ENCODE measurements at regions of chr2 and their contacts with region 1.

Region 1: GRCh38 chr2:134988994-134989605 is 58.1 kb downstream of the MAP3K19 start:
- DNase-seq: peak; percentile 20 to 43 (median 38)
- ATAC-seq: peak; percentile 82
- H3K4me3 ChIP-seq: no peak overlapping the region
- H3K27ac ChIP-seq: no peak overlapping the region
- H3K4me1 ChIP-seq: no peaks in the 10 kb centered on the region
- H3K27me3 ChIP-seq: peaks cover 8 to 9% of the 10 kb centered on the region in 2 experiments; a peak in 3 of 5 replicates
- CTCF ChIP-seq: peak in 2 of 3 experiments; percentile 34 to 64; a peak in 5 of 6 replicates
- EP300 ChIP-seq: no peak
- POLR2A ChIP-seq: no peak
- RAD21 ChIP-seq: peak; percentile 62 to 75

Region 2: DNA sequence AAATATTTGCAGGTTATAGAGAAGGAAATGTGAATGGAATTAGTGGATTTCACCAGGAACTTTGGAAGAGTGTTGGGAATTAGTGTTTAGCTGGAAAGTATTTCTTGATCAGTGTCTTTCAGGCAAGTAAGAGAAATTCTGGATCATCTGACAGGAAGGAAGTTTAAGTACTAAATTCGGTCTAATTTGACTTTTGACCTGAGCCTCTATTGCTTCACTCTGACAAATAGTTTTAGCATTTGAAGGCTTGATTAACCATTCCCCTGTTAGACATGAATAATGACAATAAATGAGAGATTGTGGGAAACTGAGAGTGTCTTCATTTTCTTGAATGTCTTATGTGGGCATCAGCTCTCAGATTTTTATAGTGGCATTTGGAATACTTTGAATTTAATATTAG is 54.5 kb before region 1 on chr2:
- CTCF ChIA-PET with region 1: no interaction called
- POLR2A ChIA-PET with region 1: no interaction called
- in situ Hi-C with region 1: no loop called
- intact Hi-C with region 1: no loop called
- DNase-seq: no peak
- ATAC-seq: no peak
- H3K4me3 ChIP-seq: no peak overlapping the region
- H3K27ac ChIP-seq: no peak overlapping the region
- H3K4me1 ChIP-seq: 0 out of 5 replicates have a peak, but pooled peaks cover 0 to 4% of the 10 kb centered on the region in 2 experiments
- H3K27me3 ChIP-seq: no peaks in the 10 kb centered on the region
- CTCF ChIP-seq: no peak
- EP300 ChIP-seq: no peak
- POLR2A ChIP-seq: no peak
- RAD21 ChIP-seq: no peak

Region 3: GRCh38 chr2:135103843-135104242 is 114.7 kb after region 1 on chr2:
- CTCF ChIA-PET with region 1: no interaction called
- POLR2A ChIA-PET with region 1: no interaction called
- in situ Hi-C with region 1: no loop called
- intact Hi-C with region 1: no loop called
- DNase-seq: no peak
- ATAC-seq: no peak
- H3K4me3 ChIP-seq: no peak overlapping the region
- H3K27ac ChIP-seq: no peak overlapping the region
- H3K4me1 ChIP-seq: no peaks in the 10 kb centered on the region
- H3K27me3 ChIP-seq: no peaks in the 10 kb centered on the region
- CTCF ChIP-seq: no peak
- EP300 ChIP-seq: no peak
- POLR2A ChIP-seq: no peak
- RAD21 ChIP-seq: no peak

Region 4: GRCh38 chr2:135709992-135710391 is 720.9 kb after region 1 on chr2:
- CTCF ChIA-PET with region 1: interaction called, 14 read pairs
- POLR2A ChIA-PET with region 1: no interaction called
- in situ Hi-C with region 1: no loop called
- intact Hi-C with region 1: no loop called
- DNase-seq: peak; percentile 60 to 70 (median 66)
- ATAC-seq: peak; percentile 90
- H3K4me3 ChIP-seq: no peak overlapping the region
- H3K27ac ChIP-seq: no peak overlapping the region
- H3K4me1 ChIP-seq: no peaks in the 10 kb centered on the region
- H3K27me3 ChIP-seq: no peaks in the 10 kb centered on the region
- CTCF ChIP-seq: peak; percentile 72 to 92 (median 87)
- EP300 ChIP-seq: no peak
- POLR2A ChIP-seq: no peak
- RAD21 ChIP-seq: peak; percentile 76 to 81

Region 5: GRCh38 chr2:135797497-135798274 is 808.6 kb after region 1 on chr2:
- CTCF ChIA-PET with region 1: interaction called, 4 read pairs
- POLR2A ChIA-PET with region 1: no interaction called
- in situ Hi-C with region 1: loop called (anchors 10 kb)
- intact Hi-C with region 1: loop called (anchors 1 kb)
- DNase-seq: peak; percentile 81 to 86 (median 82)
- ATAC-seq: peak; percentile 94
- H3K4me3 ChIP-seq: no peak overlapping the region
- H3K27ac ChIP-seq: no peak overlapping the region
- H3K4me1 ChIP-seq: no peaks in the 10 kb centered on the region; a peak in 2 of 5 replicates
- H3K27me3 ChIP-seq: no peaks in the 10 kb centered on the region
- CTCF ChIP-seq: peak; percentile 94 to 97 (median 96)
- EP300 ChIP-seq: no peak
- POLR2A ChIP-seq: no peak
- RAD21 ChIP-seq: peak; percentile 48 to 77

Region 6: DNA sequence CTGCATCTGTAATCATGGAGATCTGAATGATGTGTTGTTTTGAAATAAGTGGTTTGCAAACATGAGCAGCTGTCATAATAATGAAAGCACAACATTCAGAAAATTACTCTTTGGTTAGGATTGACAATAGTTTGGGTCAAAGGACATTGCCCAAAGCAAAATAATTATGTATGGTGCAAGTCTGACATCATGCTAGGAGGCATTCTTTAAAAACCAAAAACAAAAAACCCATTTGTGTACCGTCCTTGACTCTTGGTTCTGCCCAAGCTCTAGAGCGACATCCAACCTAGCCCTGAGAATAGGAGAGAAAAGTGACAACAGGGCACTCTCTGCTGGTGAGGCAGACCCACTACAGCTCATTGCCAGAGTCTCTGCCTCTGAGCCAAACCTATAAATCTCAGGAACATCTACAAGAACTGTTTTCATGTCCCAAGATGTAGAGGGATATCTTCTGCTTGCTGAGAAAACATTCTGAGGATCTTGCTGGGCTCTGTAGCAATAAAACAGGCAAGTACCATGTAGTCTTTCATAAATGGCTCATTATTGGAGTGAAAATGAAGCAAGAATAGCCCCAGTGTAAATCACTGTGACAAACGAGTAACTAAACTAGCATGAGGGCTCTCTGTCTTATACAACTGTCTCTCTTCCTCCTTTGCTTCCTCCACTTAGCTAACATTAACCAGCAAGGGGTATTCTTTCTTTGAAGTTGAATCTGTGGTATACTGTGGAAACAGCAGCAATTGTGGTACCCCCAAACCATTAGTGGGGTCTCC is 1395.6 kb after region 1 on chr2:
- CTCF ChIA-PET with region 1: no interaction called
- POLR2A ChIA-PET with region 1: no interaction called
- in situ Hi-C with region 1: loop called (anchors 25 kb)
- intact Hi-C with region 1: no loop called
- DNase-seq: peak; percentile 17 to 24 (median 20)
- ATAC-seq: peak; percentile 91
- H3K4me3 ChIP-seq: no peak overlapping the region
- H3K27ac ChIP-seq: no peak overlapping the region
- H3K4me1 ChIP-seq: no peaks in the 10 kb centered on the region
- H3K27me3 ChIP-seq: no peaks in the 10 kb centered on the region
- CTCF ChIP-seq: peak; percentile 57 to 62 (median 61); a peak in 5 of 6 replicates
- EP300 ChIP-seq: no peak
- POLR2A ChIP-seq: no peak
- RAD21 ChIP-seq: peak; percentile 56 to 72